ENCODE measurements at regions of chr5 and their contacts with region 1.

Region 1: DNA sequence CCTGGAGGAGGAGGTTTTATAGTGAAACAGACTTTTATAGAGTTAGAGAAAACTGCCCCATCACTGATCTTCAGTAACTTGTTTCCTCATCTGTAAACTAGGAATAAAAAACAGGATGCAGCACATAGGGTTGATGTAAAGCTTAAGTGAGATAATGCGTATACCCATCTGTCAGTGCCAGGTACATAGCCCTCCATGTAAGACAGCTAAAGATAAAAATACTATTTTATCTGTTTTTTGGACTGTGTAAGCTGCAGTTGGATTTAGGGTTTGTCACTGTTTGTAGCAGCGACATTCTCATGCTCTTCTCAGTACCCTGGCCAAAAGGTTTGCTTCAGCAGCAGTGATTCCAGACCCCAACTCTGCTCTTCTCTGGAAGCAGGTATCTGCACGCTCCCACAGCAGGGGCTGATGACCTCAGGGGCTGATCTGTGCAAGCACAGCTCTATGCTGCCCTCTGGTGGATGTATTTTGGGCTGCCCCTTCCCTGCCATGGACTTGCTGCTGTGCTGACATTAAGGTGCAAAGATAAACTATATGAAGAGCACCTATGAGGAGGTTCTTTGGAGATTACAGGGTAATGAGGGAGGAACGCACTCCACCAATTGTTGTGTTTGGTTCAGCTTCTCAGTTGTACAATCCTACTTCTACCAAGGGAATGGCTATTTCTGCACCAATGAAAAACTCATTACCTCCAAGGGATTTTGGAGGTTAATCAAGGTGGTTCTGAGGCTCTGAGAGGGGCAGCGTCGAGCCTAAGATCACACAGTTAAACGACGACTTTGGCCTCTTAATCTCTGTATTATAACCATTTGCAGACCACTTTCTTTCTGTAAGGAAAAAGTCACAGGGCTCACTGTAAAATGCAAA is 13.1 kb downstream of the HMHB1 start:
- DNase-seq: peak; percentile 75
- ATAC-seq: peak; percentile 88
- H3K4me3 ChIP-seq: no peak overlapping the region
- H3K27ac ChIP-seq: no peak overlapping the region
- H3K4me1 ChIP-seq: peaks cover 8% of the 10 kb centered on the region
- H3K27me3 ChIP-seq: no peaks in the 10 kb centered on the region
- CTCF ChIP-seq: peak; percentile 87
- POLR2A ChIP-seq: 0 out of 2 replicates have a peak, but pooled peaks have one; percentile 38
- RAD21 ChIP-seq: peak; percentile 99

Region 2: DNA sequence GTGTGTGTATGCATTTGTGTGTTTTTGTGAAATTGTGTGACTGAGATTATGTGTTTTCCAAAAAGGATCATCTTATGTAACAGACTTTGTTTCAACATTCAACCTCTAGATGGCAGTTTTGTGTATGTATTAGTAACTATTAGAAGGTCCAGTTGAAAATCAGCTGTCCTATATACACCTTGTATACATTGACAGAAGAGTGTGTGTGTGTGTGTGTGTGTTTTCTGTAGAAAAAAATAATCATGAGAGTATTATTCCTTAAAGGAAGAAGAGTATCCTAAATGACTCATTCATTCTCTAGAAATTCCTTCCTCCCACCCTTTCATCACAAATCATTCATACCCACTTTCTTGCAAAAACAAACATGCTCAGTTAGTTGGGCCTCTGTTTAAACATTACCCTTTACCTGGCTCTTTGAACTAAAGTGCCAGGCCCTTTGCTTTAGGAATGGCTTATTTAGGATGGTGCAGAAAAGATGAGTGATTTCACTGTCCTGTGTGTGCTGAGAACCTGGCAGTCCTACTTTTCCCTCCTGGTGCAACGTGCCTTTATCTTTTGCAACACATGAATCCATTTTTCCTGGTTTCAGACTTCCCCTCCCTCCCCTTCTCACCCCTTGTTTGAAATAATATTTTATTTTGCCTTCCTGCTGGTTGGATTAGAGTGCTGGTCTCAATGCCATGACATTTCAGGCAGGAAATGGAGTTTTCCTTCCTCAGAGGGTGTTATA is 902.7 kb before region 1 on chr5:
- CTCF ChIA-PET with region 1: no interaction called
- POLR2A ChIA-PET with region 1: no interaction called
- dilution Hi-C with region 1: no loop called
- in situ Hi-C with region 1: loop called (anchors 10 kb)
- intact Hi-C with region 1: loop called (anchors 5 kb)
- DNase-seq: peak; percentile 77
- ATAC-seq: peak; percentile 64
- H3K4me3 ChIP-seq: no peak overlapping the region
- H3K27ac ChIP-seq: no peak overlapping the region
- H3K4me1 ChIP-seq: peaks cover 7% of the 10 kb centered on the region
- H3K27me3 ChIP-seq: no peaks in the 10 kb centered on the region
- CTCF ChIP-seq: peak; percentile 50
- POLR2A ChIP-seq: no peak
- RAD21 ChIP-seq: peak; percentile 64

Region 3: DNA sequence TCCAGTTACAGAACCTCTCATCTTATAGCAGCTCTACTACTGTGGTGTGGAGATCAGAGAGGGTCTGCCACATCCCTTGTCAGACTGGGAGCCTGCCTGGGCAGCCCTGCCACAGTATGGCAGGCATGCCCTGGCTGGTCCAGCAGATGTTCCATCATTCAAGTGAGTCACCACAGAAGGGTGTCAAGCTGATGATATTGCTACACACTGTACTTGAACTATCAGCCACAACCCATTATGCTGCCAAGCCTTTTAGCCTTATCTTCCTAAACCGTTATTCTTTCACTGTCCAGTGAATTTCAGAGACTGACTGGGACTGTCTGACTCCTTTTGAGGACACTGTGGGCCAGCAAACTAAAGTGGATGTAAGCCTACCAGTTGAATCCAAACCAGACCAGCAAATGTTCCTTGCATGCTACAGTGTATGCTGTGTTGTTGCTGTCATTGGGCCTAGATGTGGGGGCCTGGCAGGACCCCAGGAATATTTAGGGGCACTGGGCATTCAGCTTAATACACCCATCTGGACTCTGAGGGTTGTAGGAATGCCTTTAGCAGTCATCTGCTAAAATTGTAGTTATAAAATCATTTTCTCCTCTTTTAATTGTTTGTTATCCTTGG is 624.2 kb before region 1 on chr5:
- CTCF ChIA-PET with region 1: no interaction called
- POLR2A ChIA-PET with region 1: no interaction called
- dilution Hi-C with region 1: no loop called
- in situ Hi-C with region 1: no loop called
- intact Hi-C with region 1: loop called (anchors 10 kb)
- DNase-seq: peak; percentile 81
- ATAC-seq: peak; percentile 59
- H3K4me3 ChIP-seq: no peak overlapping the region
- H3K27ac ChIP-seq: no peak overlapping the region
- H3K4me1 ChIP-seq: peaks cover 6% of the 10 kb centered on the region
- H3K27me3 ChIP-seq: no peaks in the 10 kb centered on the region
- CTCF ChIP-seq: no peak
- POLR2A ChIP-seq: no peak
- RAD21 ChIP-seq: no peak

Region 4: DNA sequence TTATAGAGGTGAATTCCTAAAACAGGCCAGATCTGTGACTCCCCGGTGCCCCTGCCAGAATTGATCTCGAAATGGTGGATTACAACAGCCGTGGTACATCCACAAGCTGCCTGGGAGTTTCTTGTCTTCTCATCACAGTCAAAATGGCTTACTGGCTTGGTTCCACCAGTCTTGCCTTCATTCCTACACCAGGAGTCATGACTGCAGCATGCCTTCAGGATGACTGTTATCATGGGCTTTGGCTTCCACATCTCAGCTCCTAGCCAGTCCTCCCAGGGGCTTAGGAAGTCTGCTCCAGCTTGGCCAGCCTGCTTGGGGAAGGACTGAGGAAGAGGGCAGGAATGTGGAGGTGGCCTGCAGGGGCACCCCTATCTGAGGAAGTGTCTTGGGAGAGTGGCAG is 288.7 kb before region 1 on chr5:
- CTCF ChIA-PET with region 1: no interaction called
- POLR2A ChIA-PET with region 1: no interaction called
- dilution Hi-C with region 1: no loop called
- in situ Hi-C with region 1: no loop called
- intact Hi-C with region 1: loop called (anchors 1 kb)
- DNase-seq: peak; percentile 99
- ATAC-seq: peak; percentile 99
- H3K4me3 ChIP-seq: no peak overlapping the region
- H3K27ac ChIP-seq: peak overlapping the region; percentile 69
- H3K4me1 ChIP-seq: peaks cover 2% of the 10 kb centered on the region
- H3K27me3 ChIP-seq: no peaks in the 10 kb centered on the region
- CTCF ChIP-seq: no peak
- POLR2A ChIP-seq: no peak; the same call in 1 of the 2 replicates
- RAD21 ChIP-seq: peak; percentile 38; the same call in 1 of the 2 replicates

Region 5: GRCh38 chr5:143550986-143551630 is 274.0 kb before region 1 on chr5:
- CTCF ChIA-PET with region 1: no interaction called
- POLR2A ChIA-PET with region 1: no interaction called
- dilution Hi-C with region 1: no loop called
- in situ Hi-C with region 1: no loop called
- intact Hi-C with region 1: no loop called
- DNase-seq: peak; percentile 40
- ATAC-seq: peak; percentile 6; the same call in 1 of the 2 replicates
- H3K4me3 ChIP-seq: no peak overlapping the region
- H3K27ac ChIP-seq: peak overlapping the region; percentile 68
- H3K4me1 ChIP-seq: peaks cover 16% of the 10 kb centered on the region
- H3K27me3 ChIP-seq: no peaks in the 10 kb centered on the region
- CTCF ChIP-seq: no peak
- POLR2A ChIP-seq: no peak
- RAD21 ChIP-seq: no peak

Region 6: DNA sequence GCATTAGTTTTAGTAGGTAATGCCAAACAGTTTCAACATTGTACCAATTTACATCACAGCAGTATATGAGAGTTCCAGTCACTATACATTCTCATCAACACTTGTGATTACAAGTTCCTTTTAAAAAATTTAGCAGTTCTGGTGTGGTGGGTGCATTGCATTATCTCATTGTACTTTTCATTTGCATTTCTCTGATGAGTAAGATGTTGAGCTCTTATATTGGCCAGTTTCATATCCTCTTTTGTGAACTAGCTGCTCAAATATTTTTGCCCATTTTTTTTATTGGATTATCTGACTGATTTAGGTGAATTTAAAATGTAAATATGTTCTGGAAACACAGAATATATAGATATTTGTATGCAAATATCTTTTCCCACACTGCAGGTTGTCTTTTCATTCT is 260.7 kb before region 1 on chr5:
- CTCF ChIA-PET with region 1: no interaction called
- POLR2A ChIA-PET with region 1: no interaction called
- dilution Hi-C with region 1: no loop called
- in situ Hi-C with region 1: loop called (anchors 10 kb)
- intact Hi-C with region 1: no loop called
- DNase-seq: no peak
- ATAC-seq: no peak
- H3K4me3 ChIP-seq: no peak overlapping the region
- H3K27ac ChIP-seq: no peak overlapping the region
- H3K4me1 ChIP-seq: peaks cover 5% of the 10 kb centered on the region
- H3K27me3 ChIP-seq: no peaks in the 10 kb centered on the region
- CTCF ChIP-seq: no peak
- POLR2A ChIP-seq: no peak
- RAD21 ChIP-seq: no peak

Region 7: DNA sequence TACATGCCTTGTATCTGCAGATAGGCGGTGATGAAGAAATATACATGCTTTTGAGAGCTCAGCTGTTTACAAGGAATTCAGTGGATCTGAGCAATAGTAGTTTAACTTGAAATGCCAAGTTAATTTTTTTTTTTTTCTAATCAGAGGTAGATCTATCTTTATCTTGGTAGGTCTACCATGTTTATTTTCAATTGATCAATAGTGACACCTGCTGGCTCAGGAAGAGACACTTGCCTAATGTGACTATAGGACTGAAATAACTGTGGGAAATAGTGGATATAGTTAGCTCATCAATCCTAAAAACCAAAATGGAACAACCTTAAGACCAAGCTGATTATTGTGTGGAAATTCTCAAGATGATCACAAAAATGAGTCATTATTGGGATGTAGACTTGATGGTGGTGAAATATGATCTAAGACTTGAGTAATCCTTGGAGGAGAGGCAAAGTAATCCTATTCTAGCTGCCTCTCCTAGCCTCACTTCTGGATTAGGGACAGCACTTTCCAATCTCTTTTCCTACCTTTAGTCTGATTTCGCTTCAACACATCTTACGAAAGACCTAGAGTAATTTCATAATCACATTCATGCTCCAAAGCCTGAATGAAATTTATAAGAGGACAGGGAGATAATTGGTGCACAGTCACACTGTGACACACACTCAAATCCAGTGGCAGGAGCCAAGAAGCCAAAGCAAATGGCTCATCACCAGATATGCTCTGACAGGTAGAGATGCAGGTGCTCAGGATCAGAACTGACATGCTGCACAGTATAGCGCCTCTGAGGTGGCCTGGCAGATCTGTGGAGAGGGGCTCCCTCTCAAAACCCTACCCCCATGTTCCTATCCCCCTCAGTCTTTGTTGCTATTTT is 143.2 kb after region 1 on chr5:
- CTCF ChIA-PET with region 1: interaction called, 3 read pairs
- POLR2A ChIA-PET with region 1: no interaction called
- dilution Hi-C with region 1: no loop called
- in situ Hi-C with region 1: no loop called
- intact Hi-C with region 1: loop called (anchors 5 kb)
- DNase-seq: peak; percentile 78
- ATAC-seq: peak; percentile 66
- H3K4me3 ChIP-seq: no peak overlapping the region
- H3K27ac ChIP-seq: no peak overlapping the region
- H3K4me1 ChIP-seq: peaks cover 4% of the 10 kb centered on the region; the same call in 1 of the 2 replicates
- H3K27me3 ChIP-seq: no peaks in the 10 kb centered on the region
- CTCF ChIP-seq: peak; percentile 52
- POLR2A ChIP-seq: no peak
- RAD21 ChIP-seq: peak; percentile 58

Region 8: DNA sequence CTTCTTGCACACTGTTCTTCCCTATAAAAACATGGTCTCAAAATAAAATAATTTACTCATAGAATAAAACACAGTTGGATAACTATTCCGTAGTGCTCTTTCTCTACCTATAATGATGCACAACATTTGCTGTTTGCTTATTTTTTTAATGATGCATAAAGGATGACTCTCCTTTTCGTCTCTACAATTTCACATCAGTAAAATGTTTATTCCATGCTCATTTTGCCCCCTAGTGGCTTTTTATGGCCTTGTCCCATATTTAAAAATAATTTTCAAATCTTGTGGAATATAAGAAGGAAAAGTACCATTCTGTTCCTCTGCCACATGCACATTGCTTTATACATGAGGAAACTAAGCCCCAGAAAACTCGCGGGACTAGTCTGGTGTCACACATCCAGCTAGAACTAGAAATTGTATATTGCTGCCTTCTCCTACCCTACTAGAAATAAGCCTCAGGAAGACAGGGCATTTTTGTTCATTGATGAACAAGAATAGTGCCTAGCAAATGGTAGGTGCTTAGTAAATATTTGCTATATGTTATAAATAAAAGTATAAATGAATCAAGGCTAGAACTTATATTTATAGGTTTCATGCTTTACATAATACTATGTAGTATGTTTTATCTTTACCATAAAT is 358.3 kb after region 1 on chr5:
- CTCF ChIA-PET with region 1: no interaction called
- POLR2A ChIA-PET with region 1: no interaction called
- dilution Hi-C with region 1: no loop called
- in situ Hi-C with region 1: no loop called
- intact Hi-C with region 1: loop called (anchors 2 kb)
- DNase-seq: peak; percentile 85
- ATAC-seq: peak; percentile 66
- H3K4me3 ChIP-seq: no peak overlapping the region
- H3K27ac ChIP-seq: no peak overlapping the region
- H3K4me1 ChIP-seq: peaks cover 3% of the 10 kb centered on the region; the same call in 1 of the 2 replicates
- H3K27me3 ChIP-seq: no peaks in the 10 kb centered on the region
- CTCF ChIP-seq: peak; percentile 79
- POLR2A ChIP-seq: no peak
- RAD21 ChIP-seq: peak; percentile 74

Measured in IMR-90 (cell line).